HEK293 (cell line): ENCODE measurements at regions of chr4 and their contacts with region 1.

Region 1: GRCh38 chr4:44678094-44679041 is at the start of gene GUF1:
- H3K4me3 ChIP-seq: peak within 1 kb of the TSS; percentile 84
- H3K27ac ChIP-seq: peak within 1 kb of the TSS; percentile 6; the same call in 1 of the 2 replicates
- H3K4me1 ChIP-seq: no peaks in the 10 kb centered on the region
- CTCF ChIP-seq: no peak

Region 2: GRCh38 chr4:44701037-44701436 is 22.7 kb after region 1 on chr4:
- CTCF ChIA-PET with region 1: no interaction called
- POLR2A ChIA-PET with region 1: no interaction called
- H3K4me3 ChIP-seq: no peak overlapping the region
- H3K27ac ChIP-seq: no peak overlapping the region
- H3K4me1 ChIP-seq: no peaks in the 10 kb centered on the region
- CTCF ChIP-seq: no peak

Region 3: DNA sequence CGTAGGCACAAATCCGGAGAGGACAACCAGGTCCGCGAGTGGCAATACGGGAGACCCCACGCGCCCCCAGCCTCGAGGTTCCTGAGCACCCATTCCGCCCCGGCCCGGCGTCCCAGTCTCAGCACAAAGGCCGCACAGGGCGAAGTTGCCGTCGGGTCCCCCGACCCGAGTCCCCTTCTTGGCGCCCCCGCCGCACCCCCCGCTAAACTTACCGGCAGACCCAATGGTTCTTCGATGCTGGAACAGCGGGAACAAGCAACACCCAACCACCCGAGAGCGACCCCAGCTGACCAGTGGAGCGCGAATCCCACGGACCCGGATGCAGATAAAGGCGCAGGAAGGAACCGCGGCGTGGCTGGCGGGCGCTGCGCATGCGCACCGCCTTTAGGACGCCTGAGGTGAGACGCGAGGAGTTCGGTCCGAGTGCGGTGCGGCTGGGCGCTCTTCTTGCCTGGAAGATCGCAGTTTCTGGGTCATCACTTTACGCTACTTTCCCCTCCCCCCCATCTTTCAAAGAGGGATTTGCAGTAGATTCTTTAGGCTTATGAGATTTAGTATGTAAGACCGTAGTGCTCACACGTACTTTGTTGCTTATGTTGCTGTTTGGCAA is 48.0 kb after region 1 on chr4 and contains the start of gene GNPDA2:
- CTCF ChIA-PET with region 1: no interaction called
- POLR2A ChIA-PET with region 1: interaction called, 16 read pairs
- H3K4me3 ChIP-seq: peak within 1 kb of the TSS; percentile 74
- H3K27ac ChIP-seq: no peak within 1 kb of the TSS; the same call in 1 of the 2 replicates
- H3K4me1 ChIP-seq: no peaks in the 10 kb centered on the region
- CTCF ChIP-seq: peak; percentile 79

Region 4: GRCh38 chr4:44777115-44777514 is 98.7 kb after region 1 on chr4:
- CTCF ChIA-PET with region 1: no interaction called
- POLR2A ChIA-PET with region 1: no interaction called
- H3K4me3 ChIP-seq: no peak overlapping the region
- H3K27ac ChIP-seq: no peak overlapping the region
- H3K4me1 ChIP-seq: no peaks in the 10 kb centered on the region
- CTCF ChIP-seq: no peak